Activated CD4-positive, alpha-beta T cell treated with anti-CD3 and anti-CD28 coated beads, Interleukin-2, amount 10 ng/mL, durations not matched to agents 24 days and 14 days (primary cell): ENCODE measurements at regions of chr1 and their contacts with region 1.

Region 1: DNA sequence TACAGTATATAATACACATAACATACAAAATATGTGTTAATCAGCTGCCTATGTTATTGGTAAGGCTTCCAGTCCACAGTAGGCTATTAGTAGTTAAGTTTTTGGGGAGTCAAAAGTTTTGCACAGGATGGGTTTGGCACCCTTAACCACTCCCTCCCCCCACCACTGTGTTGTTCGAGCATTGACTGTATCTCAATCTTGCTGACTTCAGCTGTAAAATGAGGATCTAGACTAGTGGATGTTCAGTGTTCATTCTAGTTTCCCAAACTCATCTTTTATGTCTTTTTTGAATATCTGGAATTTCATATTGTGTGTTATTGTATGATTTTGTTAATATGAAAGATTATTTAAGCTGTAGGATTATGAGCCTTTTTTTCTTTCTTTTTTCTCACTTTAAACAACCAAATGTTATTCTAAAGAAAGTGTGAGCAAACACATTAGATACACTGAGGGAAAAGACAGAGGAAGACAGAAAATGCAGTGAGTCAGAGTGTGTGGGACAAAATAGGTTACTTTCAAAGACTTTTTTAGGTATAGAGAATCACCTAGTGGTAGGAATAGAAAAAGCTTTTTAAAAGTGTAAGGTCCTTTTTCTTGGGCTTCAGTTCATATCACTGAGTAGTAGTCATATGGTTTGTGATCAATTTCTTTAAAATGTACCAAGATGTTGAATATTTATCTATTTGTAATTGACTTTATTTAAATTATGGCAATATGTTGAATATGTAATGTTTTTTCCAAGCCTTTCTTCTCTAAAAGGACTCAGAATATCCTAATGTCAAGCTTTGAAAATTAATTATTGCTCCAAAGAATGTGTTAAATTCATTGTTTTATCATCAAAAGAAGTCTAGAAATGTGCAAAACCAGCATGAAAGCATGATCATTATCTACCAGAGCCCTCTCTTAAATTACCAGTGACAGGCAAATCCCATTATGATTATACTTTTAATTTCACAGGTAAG is 17.9 kb upstream of the CENPF start:
- DNase-seq: no peak
- H3K4me3 Mint-ChIP-seq: no peak overlapping the region
- H3K27ac Mint-ChIP-seq: peak overlapping the region; percentile 9
- H3K4me1 Mint-ChIP-seq: peaks cover 8% of the 10 kb centered on the region
- H3K27me3 Mint-ChIP-seq: peaks cover 2% of the 10 kb centered on the region

Region 2: GRCh38 chr1:214213136-214213535 is 371.9 kb before region 1 on chr1:
- intact Hi-C with region 1: loop called (anchors 5 kb)
- DNase-seq: no peak
- H3K4me3 Mint-ChIP-seq: no peak overlapping the region
- H3K27ac Mint-ChIP-seq: no peak overlapping the region
- H3K4me1 Mint-ChIP-seq: no peaks in the 10 kb centered on the region
- H3K27me3 Mint-ChIP-seq: peaks cover 32% of the 10 kb centered on the region

Region 3: GRCh38 chr1:214386747-214387146 is 198.3 kb before region 1 on chr1:
- intact Hi-C with region 1: loop called (anchors 1 kb)
- DNase-seq: peak; percentile 76
- H3K4me3 Mint-ChIP-seq: peak overlapping the region; percentile 53
- H3K27ac Mint-ChIP-seq: peak overlapping the region; percentile 84
- H3K4me1 Mint-ChIP-seq: peaks cover 28% of the 10 kb centered on the region
- H3K27me3 Mint-ChIP-seq: no peaks in the 10 kb centered on the region

Region 4: GRCh38 chr1:214551436-214552173 is 33.5 kb before region 1 on chr1 and contains the start of gene PTPN14:
- intact Hi-C with region 1: loop called (anchors 2 kb)
- DNase-seq: peak; percentile 71
- H3K4me3 Mint-ChIP-seq: peak within 1 kb of the TSS; percentile 93
- H3K27ac Mint-ChIP-seq: peak within 1 kb of the TSS; percentile 87
- H3K4me1 Mint-ChIP-seq: peaks cover 19% of the 10 kb centered on the region
- H3K27me3 Mint-ChIP-seq: peaks cover 56% of the 10 kb centered on the region
- total RNA-seq, gene PTPN14: 29.7 and 29.9 TPM in 2 replicates

Region 5: GRCh38 chr1:214566158-214567104 is 18.7 kb before region 1 on chr1:
- intact Hi-C with region 1: no loop called
- DNase-seq: no peak
- H3K4me3 Mint-ChIP-seq: no peak overlapping the region
- H3K27ac Mint-ChIP-seq: peak overlapping the region; percentile 45
- H3K4me1 Mint-ChIP-seq: peaks cover 7% of the 10 kb centered on the region
- H3K27me3 Mint-ChIP-seq: peaks cover 9% of the 10 kb centered on the region